ENCODE measurements at regions of chr19 and their contacts with region 1.

Region 1: GRCh38 chr19:53103198-53103944 is at the start of gene ZNF160:
- DNase-seq: peak; percentile 99
- H3K4me3 ChIP-seq: peak within 1 kb of the TSS; percentile 62 to 99 (median 94)
- H3K27ac ChIP-seq: peak within 1 kb of the TSS; percentile 84 to 98 (median 96)
- H3K4me1 ChIP-seq: peaks cover 9 to 24% (median 14%) of the 10 kb centered on the region in 4 donors
- H3K27me3 ChIP-seq: no peaks in the 10 kb centered on the region
- CTCF ChIP-seq: no peak
- EP300 ChIP-seq: no peak
- POLR2A ChIP-seq: peak; percentile 93
- total RNA-seq, gene ZNF160: 23.9 to 47.0 (median 33.6) TPM

Region 2: GRCh38 chr19:53003993-53004661 is 99.2 kb before region 1 on chr19:
- in situ Hi-C with region 1: no loop called
- intact Hi-C with region 1: no loop called
- DNase-seq: no peak
- H3K4me3 ChIP-seq: no peak overlapping the region
- H3K27ac ChIP-seq: no peak overlapping the region
- H3K4me1 ChIP-seq: no peaks in the 10 kb centered on the region
- H3K27me3 ChIP-seq: no peaks in the 10 kb centered on the region
- CTCF ChIP-seq: no peak
- EP300 ChIP-seq: no peak
- POLR2A ChIP-seq: no peak

Region 3: GRCh38 chr19:53132141-53132991 is 29.0 kb after region 1 on chr19 and contains the start of gene ZNF415:
- in situ Hi-C with region 1: no loop called
- intact Hi-C with region 1: loop called (anchors 2 kb)
- DNase-seq: peak; percentile 79
- H3K4me3 ChIP-seq: peak within 1 kb of the TSS; percentile 56 to 88 (median 71)
- H3K27ac ChIP-seq: peak within 1 kb of the TSS; percentile 67 to 84 (median 79)
- H3K4me1 ChIP-seq: peaks cover 0 to 18% (median 8%) of the 10 kb centered on the region in 4 donors
- H3K27me3 ChIP-seq: no peaks in the 10 kb centered on the region
- CTCF ChIP-seq: no peak
- EP300 ChIP-seq: no peak
- POLR2A ChIP-seq: peak; percentile 26
- total RNA-seq, gene ZNF415: 5.6 to 11.5 (median 10.8) TPM in 3 of 4 donors, not detected in the other

Region 4: GRCh38 chr19:53183146-53183764 is 79.9 kb after region 1 on chr19:
- in situ Hi-C with region 1: no loop called
- intact Hi-C with region 1: no loop called
- DNase-seq: no peak
- H3K4me3 ChIP-seq: no peak overlapping the region
- H3K27ac ChIP-seq: no peak overlapping the region
- H3K4me1 ChIP-seq: no peaks in the 10 kb centered on the region
- H3K27me3 ChIP-seq: no peaks in the 10 kb centered on the region
- CTCF ChIP-seq: no peak
- EP300 ChIP-seq: no peak
- POLR2A ChIP-seq: no peak

Region 5: DNA sequence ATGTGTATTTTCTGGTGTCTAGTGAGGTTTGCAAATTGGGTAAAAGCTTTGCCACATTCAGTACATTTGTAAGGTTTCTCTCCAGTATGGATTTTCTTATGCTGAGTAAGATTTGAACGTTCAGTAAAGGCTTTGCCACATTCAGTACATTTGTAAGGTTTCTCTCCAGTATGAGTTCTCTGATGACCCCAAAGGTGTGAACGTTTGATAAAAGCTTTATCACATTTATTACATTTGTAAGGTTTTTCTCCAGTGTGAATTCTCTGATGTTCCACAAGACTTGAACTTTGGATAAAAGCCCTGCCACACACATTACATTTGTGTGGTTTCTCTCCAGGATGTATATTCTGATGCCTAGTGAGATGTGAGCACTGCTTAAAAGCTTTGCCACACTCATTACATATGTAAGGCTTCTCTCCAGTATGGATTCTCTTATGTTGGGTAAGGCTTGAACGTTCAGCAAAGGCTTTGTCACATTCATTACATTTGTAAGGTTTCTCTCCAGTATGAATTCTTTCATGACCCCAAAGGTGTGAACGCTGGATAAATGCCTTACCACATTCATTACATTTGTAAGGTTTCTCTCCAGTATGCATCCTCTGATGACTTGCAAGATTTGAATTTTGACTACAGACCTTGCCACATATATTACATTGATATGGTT is 133.9 kb after region 1 on chr19:
- in situ Hi-C with region 1: no loop called
- intact Hi-C with region 1: no loop called
- DNase-seq: no peak
- H3K4me3 ChIP-seq: no peak overlapping the region
- H3K27ac ChIP-seq: no peak overlapping the region
- H3K4me1 ChIP-seq: no peaks in the 10 kb centered on the region
- H3K27me3 ChIP-seq: no peaks in the 10 kb centered on the region
- CTCF ChIP-seq: no peak
- EP300 ChIP-seq: no peak
- POLR2A ChIP-seq: no peak